GM12878 (cell line): ENCODE measurements at regions of chr7 and their contacts with region 1.

Region 1: GRCh38 chr7:45136106-45137060 is 21.2 kb upstream of the RAMP3 start:
- DNase-seq: peak; percentile 41
- ATAC-seq: peak; percentile 86
- H3K4me3 ChIP-seq: no peak overlapping the region
- H3K27ac ChIP-seq: no peak overlapping the region
- H3K4me1 ChIP-seq: peaks cover 4% of the 10 kb centered on the region; the same call in 1 of the 2 replicates
- H3K27me3 ChIP-seq: no peaks in the 10 kb centered on the region
- CTCF ChIP-seq: peak; percentile 81 to 94 (median 84)
- EP300 ChIP-seq: no peak
- POLR2A ChIP-seq: no peak
- RAD21 ChIP-seq: peak; percentile 97

Region 2: DNA sequence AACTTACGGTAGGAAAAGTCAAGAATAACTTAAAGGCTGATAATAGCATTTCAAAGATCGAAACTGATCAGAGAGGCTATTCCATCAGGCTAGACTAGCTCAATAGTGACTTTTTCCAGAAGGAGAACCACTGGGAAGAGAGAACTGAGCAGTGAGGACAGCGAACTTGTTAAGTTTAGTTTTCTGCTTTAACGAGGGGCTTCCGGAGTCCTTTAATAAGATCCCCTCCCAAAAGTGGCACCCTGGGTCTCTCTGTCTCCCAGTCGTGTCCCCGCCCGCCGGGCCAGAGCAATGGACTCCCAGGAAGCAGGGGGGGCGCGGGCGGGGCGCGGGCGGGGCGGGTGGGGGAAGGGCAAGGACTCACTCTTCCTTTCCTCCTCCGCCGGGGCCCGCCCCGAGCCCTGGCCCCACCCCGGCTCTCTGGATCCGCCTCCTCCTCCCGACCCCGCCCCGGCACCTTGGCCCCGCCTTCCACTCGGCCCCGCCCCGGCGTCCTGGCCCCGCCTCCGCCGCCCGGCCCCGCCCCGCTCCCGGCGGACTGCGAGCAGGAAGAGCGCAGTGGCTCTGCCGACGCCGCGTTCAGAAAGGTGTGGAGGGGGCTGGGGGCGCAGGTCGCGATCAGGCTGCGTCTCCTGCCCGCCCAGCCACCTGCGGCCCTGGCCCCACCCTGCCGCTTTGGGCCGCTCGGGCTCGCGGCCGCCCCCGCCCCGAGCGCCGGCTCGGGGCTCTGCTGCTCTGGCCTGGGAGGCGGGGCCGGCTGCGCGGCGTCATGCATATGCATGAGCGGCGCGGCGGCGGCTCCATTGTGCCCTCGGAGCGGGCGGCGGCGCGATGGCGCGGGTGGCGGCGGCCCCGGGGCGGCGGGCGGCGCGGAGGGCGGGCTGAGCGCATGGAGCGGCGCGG is 388.1 kb before region 1 on chr7 and contains the start of gene ZMIZ2:
- CTCF ChIA-PET with region 1: interaction called, 10 read pairs
- POLR2A ChIA-PET with region 1: no interaction called
- RAD21 ChIA-PET with region 1: no interaction called
- SMC1A ChIA-PET with region 1: no interaction called
- in situ Hi-C with region 1: no loop called
- intact Hi-C with region 1: no loop called
- DNase-seq: no peak
- ATAC-seq: peak; percentile 63
- H3K4me3 ChIP-seq: peak within 1 kb of the TSS; percentile 92
- H3K27ac ChIP-seq: peak within 1 kb of the TSS; percentile 92
- H3K4me1 ChIP-seq: peaks cover 17% of the 10 kb centered on the region
- H3K27me3 ChIP-seq: no peaks in the 10 kb centered on the region
- CTCF ChIP-seq: no peak
- EP300 ChIP-seq: no peak
- POLR2A ChIP-seq: peak; percentile 62; the same call in 1 of the 2 replicates
- RAD21 ChIP-seq: no peak
- polyA plus RNA-seq, gene ZMIZ2: 0.71 to 1.5 TPM

Region 3: DNA sequence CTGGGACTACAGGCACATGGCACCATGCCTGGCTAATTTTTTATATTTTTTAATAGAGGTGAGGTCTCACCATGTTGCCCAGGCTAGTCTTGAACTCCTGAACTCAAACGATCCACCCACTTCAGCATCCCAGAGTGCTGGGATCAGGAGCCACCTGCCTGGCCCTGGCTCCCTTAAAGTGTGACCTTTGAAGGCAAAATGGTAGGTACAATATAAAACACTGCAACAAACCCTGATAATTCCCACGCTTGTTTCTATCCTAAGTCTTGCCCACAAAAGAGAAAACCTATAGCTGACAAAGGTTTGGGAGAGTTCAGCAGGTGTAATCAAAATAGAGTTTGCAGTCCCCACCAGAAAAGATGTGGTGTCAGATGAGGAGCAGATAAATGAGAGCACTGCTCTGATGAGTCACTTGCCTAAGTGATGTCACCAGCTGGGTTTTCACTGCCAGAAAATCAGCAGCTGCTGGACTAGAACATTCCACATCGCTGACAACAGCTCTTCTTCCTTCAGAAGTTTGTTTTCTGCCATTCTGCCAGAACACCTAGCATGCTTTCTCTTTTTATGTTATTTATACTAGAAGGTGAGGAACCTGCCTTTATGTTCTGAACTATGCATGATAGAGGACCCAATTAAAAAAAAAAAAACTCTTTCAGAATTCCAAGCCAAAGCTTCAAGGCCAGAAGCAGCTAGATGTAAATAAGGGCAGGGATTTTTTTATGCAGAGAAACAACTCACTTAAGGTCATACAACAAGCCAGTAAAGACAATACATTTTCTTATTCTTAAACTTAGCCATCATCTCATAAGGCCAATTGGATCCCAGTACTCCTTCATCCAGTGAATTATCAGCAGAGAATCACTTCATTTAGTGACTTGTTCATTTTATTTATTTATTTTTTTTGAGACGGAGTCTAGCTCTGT is 269.0 kb before region 1 on chr7:
- CTCF ChIA-PET with region 1: interaction called, 145 read pairs
- POLR2A ChIA-PET with region 1: no interaction called
- RAD21 ChIA-PET with region 1: no interaction called
- SMC1A ChIA-PET with region 1: interaction called, 3 read pairs
- in situ Hi-C with region 1: no loop called
- intact Hi-C with region 1: no loop called
- DNase-seq: no peak
- ATAC-seq: 0 out of 3 replicates have a peak, but pooled peaks have one; percentile 18
- H3K4me3 ChIP-seq: no peak overlapping the region
- H3K27ac ChIP-seq: no peak overlapping the region
- H3K4me1 ChIP-seq: no peaks in the 10 kb centered on the region
- H3K27me3 ChIP-seq: no peaks in the 10 kb centered on the region; a peak in 1 of 4 replicates
- CTCF ChIP-seq: no peak
- EP300 ChIP-seq: no peak
- POLR2A ChIP-seq: no peak
- RAD21 ChIP-seq: no peak

Region 4: GRCh38 chr7:44921607-44922359 is 214.6 kb before region 1 on chr7:
- CTCF ChIA-PET with region 1: interaction called, 14 read pairs
- POLR2A ChIA-PET with region 1: no interaction called
- RAD21 ChIA-PET with region 1: interaction called, 15 read pairs
- SMC1A ChIA-PET with region 1: interaction called, 16 read pairs
- in situ Hi-C with region 1: no loop called
- intact Hi-C with region 1: loop called (anchors 2 kb)
- DNase-seq: peak; percentile 15
- ATAC-seq: peak; percentile 100
- H3K4me3 ChIP-seq: no peak overlapping the region
- H3K27ac ChIP-seq: no peak overlapping the region
- H3K4me1 ChIP-seq: no peaks in the 10 kb centered on the region
- H3K27me3 ChIP-seq: no peaks in the 10 kb centered on the region
- CTCF ChIP-seq: peak; percentile 86 to 92 (median 88)
- EP300 ChIP-seq: no peak
- POLR2A ChIP-seq: no peak
- RAD21 ChIP-seq: peak; percentile 96

Region 5: GRCh38 chr7:44980393-44981034 is 155.9 kb before region 1 on chr7:
- CTCF ChIA-PET with region 1: interaction called, 219 read pairs
- POLR2A ChIA-PET with region 1: interaction called, 3 read pairs
- RAD21 ChIA-PET with region 1: interaction called, 17 read pairs
- SMC1A ChIA-PET with region 1: interaction called, 22 read pairs
- in situ Hi-C with region 1: loop called (anchors 10 kb)
- intact Hi-C with region 1: no loop called
- DNase-seq: peak; percentile 97
- ATAC-seq: peak; percentile 57
- H3K4me3 ChIP-seq: peak overlapping the region; percentile 100
- H3K27ac ChIP-seq: peak overlapping the region; percentile 96
- H3K4me1 ChIP-seq: peaks cover 57% of the 10 kb centered on the region
- H3K27me3 ChIP-seq: no peaks in the 10 kb centered on the region
- CTCF ChIP-seq: no peak
- EP300 ChIP-seq: peak; percentile 61 to 81; a peak in 2 of 4 replicates
- POLR2A ChIP-seq: no peak; the same call in 1 of the 2 replicates
- RAD21 ChIP-seq: no peak

Region 6: GRCh38 chr7:45178241-45179225 is 42.1 kb after region 1 on chr7:
- CTCF ChIA-PET with region 1: no interaction called
- POLR2A ChIA-PET with region 1: no interaction called
- RAD21 ChIA-PET with region 1: no interaction called
- SMC1A ChIA-PET with region 1: no interaction called
- in situ Hi-C with region 1: no loop called
- intact Hi-C with region 1: no loop called
- DNase-seq: no peak
- ATAC-seq: peak; percentile 73
- H3K4me3 ChIP-seq: no peak overlapping the region
- H3K27ac ChIP-seq: no peak overlapping the region
- H3K4me1 ChIP-seq: no peaks in the 10 kb centered on the region
- H3K27me3 ChIP-seq: peaks cover 0 to 2% of the 10 kb centered on the region in 2 experiments; a peak in 2 of 4 replicates
- CTCF ChIP-seq: peak; percentile 21 to 37 (median 34); a peak in 4 of 6 replicates
- EP300 ChIP-seq: no peak
- POLR2A ChIP-seq: no peak
- RAD21 ChIP-seq: peak; percentile 43

Region 7: GRCh38 chr7:45296748-45297147 is 160.4 kb after region 1 on chr7:
- CTCF ChIA-PET with region 1: no interaction called
- POLR2A ChIA-PET with region 1: no interaction called
- RAD21 ChIA-PET with region 1: no interaction called
- SMC1A ChIA-PET with region 1: no interaction called
- in situ Hi-C with region 1: no loop called
- intact Hi-C with region 1: no loop called
- DNase-seq: no peak
- ATAC-seq: no peak
- H3K4me3 ChIP-seq: no peak overlapping the region
- H3K27ac ChIP-seq: no peak overlapping the region
- H3K4me1 ChIP-seq: no peaks in the 10 kb centered on the region
- H3K27me3 ChIP-seq: no peaks in the 10 kb centered on the region; a peak in 1 of 4 replicates
- CTCF ChIP-seq: no peak
- EP300 ChIP-seq: no peak
- POLR2A ChIP-seq: no peak
- RAD21 ChIP-seq: no peak